Stomach (tissue), 19 donors: ENCODE measurements at regions of chr6 and their contacts with region 1.

Region 1: GRCh38 chr6:35573495-35574110 is 60.9 kb upstream of the TULP1 start:
- DNase-seq: no peak
- H3K4me3 ChIP-seq: no peak overlapping the region
- H3K27ac ChIP-seq: no peak overlapping the region
- H3K4me1 ChIP-seq: no peaks in the 10 kb centered on the region
- H3K27me3 ChIP-seq: no peaks in the 10 kb centered on the region
- CTCF ChIP-seq: no peak
- EP300 ChIP-seq: no peak
- POLR2A ChIP-seq: no peak

Region 2: GRCh38 chr6:35522660-35523658 is 50.6 kb before region 1 on chr6:
- intact Hi-C with region 1: loop called (anchors 10 kb)
- DNase-seq: peak; percentile 81 to 87
- H3K4me3 ChIP-seq: peak overlapping the region in 3 of 4 donors; percentile 10 to 13 (median 12)
- H3K27ac ChIP-seq: no peak overlapping the region
- H3K4me1 ChIP-seq: peaks cover 0 to 13% (median 6%) of the 10 kb centered on the region in 4 donors
- H3K27me3 ChIP-seq: no peaks in the 10 kb centered on the region
- CTCF ChIP-seq: peak in 5 of 7 experiments; percentile 82 to 100 (median 98)
- EP300 ChIP-seq: no peak
- POLR2A ChIP-seq: no peak

Region 3: GRCh38 chr6:36615018-36615761 is 1041.6 kb after region 1 on chr6:
- intact Hi-C with region 1: no loop called
- DNase-seq: peak in 1 of 2 donors; percentile 76
- H3K4me3 ChIP-seq: no peak overlapping the region
- H3K27ac ChIP-seq: peak overlapping the region in 4 of 5 donors; percentile 3 to 31 (median 14)
- H3K4me1 ChIP-seq: peaks cover 10 to 56% (median 16%) of the 10 kb centered on the region in 4 donors
- H3K27me3 ChIP-seq: no peaks in the 10 kb centered on the region
- CTCF ChIP-seq: peak in 4 of 7 experiments; percentile 55 to 71 (median 70)
- EP300 ChIP-seq: no peak
- POLR2A ChIP-seq: no peak